AG04450 (cell line): ENCODE measurements at regions of chr14 and their contacts with region 1.

Region 1: GRCh38 chr14:83975841-83976770 is 1553.8 kb upstream of the FLRT2 start:
- DNase-seq: no peak
- H3K4me3 ChIP-seq: no peak overlapping the region
- H3K27ac ChIP-seq: no peak overlapping the region
- H3K27me3 ChIP-seq: no peaks in the 10 kb centered on the region
- CTCF ChIP-seq: no peak

Region 2: GRCh38 chr14:83994020-83994419 is 17.9 kb after region 1 on chr14:
- CTCF ChIA-PET with region 1: no interaction called
- POLR2A ChIA-PET with region 1: interaction called, 14 read pairs
- DNase-seq: peak; percentile 65
- H3K4me3 ChIP-seq: no peak overlapping the region
- H3K27ac ChIP-seq: no peak overlapping the region
- H3K27me3 ChIP-seq: no peaks in the 10 kb centered on the region
- CTCF ChIP-seq: no peak